GM13976 (cell line): ENCODE measurements at regions of chr6 and their contacts with region 1.

Region 1: GRCh38 chr6:118283766-118284165 is 264.3 kb upstream of the PLN start:
- DNase-seq: peak; percentile 15
- CTCF ChIP-seq: peak; percentile 56

Region 2: DNA sequence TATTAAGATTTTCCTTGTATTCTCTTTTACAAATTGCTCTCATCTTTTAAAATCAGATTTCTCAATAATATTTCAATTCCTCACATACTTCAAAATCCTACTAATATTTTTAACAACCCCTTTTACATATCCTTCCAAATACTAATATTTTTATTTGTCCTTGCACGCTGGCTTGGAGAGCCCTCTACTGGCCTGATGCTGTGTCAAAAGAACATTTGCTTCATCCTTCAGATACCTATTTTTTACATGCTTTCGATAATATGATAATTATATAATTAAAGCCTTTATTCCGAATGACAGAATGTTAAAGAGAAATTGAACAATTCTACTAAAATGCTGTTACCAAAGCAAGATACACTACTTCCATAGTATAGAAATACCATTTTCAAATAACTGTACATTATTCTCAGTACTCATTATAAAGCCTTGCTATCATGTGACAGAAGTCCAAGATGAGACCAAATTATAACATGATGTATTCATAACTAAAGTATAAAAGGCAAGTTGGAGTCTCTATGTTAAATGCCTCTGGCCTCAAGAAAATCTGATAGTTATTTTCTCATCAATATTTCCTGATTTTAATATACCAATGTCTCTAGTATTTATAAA is 225.3 kb after region 1 on chr6:
- in situ Hi-C with region 1: loop called (anchors 25 kb)
- DNase-seq: no peak
- CTCF ChIP-seq: peak; percentile 43

Region 3: DNA sequence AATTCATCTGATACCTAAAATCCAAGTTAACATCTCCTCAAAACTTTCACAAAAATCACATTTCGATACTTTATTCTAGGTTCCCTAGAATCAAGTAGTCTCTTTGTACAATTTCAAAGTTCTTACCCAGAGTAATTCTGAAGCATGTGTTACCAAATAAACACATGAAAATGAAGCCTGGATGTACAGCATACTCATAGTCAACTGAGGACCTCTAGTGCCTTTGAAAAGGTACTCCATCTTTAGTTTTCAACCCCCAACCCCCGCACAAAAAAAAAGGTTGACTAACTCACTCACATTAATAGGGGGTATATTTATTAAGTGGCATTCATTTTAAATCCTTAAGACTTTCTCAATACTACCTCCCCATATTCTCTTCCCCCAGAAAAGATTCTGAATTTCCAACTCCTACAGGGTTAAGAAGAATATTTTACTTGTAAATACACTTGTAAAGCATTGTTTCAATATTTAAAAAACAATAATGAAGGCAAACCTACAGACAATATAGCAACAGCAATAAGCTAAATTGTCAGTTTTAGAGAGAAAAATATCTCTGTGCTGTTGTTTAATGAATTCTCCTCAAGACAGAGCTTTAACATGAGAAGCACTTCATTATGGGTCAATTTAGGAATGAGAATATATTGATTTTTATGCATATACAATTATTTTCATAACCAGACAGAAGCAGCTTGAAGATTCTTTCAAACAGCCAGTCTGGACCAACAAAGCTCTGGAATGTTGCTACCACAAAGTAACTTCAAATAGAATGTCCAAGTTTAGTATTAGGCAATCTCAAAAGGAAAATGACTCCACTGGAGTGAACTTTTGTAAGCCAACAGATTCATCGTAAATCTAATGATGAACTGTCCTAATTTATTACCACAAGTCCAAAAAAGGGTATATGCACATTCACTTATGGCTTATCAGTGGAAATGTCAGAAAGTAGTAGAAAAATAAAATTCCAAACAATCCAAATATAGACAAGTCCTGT is 267.6 kb after region 1 on chr6:
- in situ Hi-C with region 1: loop called (anchors 10 kb)
- DNase-seq: peak; percentile 48
- CTCF ChIP-seq: peak; percentile 4

Region 4: DNA sequence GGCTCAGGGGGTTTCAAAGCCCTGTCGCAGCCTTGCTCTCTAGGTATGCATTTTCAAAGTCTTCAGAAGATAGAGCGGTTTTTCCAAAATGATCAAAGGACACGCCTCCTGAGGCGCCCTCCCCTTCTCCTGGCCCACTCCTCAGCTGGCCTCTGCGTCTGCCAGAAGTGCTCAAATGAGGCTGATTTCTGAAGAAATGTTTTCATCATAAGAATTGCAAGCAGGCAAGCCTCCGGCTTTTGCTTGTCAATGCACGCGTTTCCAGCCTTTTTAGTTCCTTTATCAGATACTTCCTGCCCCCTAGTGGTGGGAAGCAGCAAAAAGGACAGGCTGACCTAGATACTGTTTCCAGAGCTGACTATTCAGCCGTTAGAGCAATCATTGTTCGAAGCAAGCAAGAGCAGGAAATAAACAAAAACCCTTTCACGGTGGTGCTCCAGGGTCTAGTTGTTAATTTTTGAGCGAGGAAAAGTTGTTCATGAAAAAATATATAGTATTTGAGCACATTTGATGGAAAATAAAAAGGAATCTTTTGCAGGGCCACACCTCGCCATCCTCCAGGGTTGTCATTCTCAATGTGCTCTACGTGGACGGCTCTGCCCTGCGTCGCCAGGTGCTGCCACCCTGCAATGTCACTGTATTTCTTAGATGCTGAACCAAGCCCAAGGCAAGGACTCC is 516.8 kb after region 1 on chr6:
- in situ Hi-C with region 1: loop called (anchors 25 kb)
- DNase-seq: peak; percentile 82
- CTCF ChIP-seq: peak; percentile 91